Left ventricle myocardium superior (tissue), 1 donor: ENCODE measurements at regions of chrX and their contacts with region 1.

Region 1: GRCh38 chrX:151151665-151152267 is 24.6 kb upstream of the GPR50 start:
- DNase-seq: no peak
- ATAC-seq: peak; percentile 52

Region 2: DNA sequence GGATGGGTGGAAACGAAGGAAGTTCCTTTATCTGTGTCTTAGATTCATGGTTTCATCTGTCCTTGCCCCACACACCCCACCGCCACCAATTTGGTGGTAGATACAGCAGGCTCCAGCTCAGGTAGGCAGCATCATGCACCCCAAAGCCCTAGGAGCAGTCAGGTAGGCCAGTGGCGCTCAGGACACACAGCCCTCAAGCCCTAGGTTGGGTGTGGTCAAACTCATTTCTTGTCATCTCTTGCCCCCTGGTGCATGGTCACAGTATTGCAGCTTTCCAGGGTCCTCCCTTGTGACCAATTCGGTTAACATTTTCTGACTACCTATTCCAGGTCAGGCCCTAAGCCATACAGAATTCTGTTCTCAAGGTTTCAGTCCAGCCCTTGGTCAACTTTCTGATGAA is 529.0 kb after region 1 on chrX:
- intact Hi-C with region 1: loop called (anchors 5 kb)
- DNase-seq: peak; percentile 48
- ATAC-seq: peak; percentile 68